Activated CD4-positive, alpha-beta memory T cell treated with anti-CD3 and anti-CD28 coated beads, Interleukin-2, amount 10 ng/mL, durations not matched to agents 7 days and 5 days (primary cell): ENCODE measurements at regions of chr6 and their contacts with region 1.

Region 1: GRCh38 chr6:139364302-139364981 is 10.0 kb downstream of the CITED2 start:
- DNase-seq: no peak
- H3K4me3 Mint-ChIP-seq: no peak overlapping the region
- H3K27ac Mint-ChIP-seq: no peak overlapping the region
- H3K4me1 Mint-ChIP-seq: peaks cover 41% of the 10 kb centered on the region
- H3K27me3 Mint-ChIP-seq: no peaks in the 10 kb centered on the region

Region 2: DNA sequence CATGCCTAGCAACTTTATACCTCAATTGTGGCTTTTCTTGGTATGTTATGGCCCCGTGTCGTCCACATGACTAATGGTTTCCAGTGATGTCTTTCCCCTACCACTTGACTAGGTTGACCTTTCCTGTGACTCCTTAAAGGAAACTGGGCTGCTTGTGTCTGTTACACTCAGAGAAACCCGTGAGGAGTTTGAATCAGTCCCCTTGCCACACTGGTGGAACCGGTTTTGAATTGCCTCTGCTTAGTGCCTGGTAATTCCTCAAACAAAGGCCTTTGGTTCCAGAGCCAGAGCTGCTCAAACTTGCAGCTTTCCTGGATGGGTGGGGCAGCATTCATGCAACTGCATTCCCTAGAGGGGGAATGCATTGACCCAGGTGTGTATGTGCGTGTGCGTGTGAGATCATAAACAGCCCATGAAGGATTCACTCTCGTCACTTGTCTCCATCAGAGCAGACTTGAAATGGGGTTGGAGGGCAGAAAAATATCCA is 546.6 kb before region 1 on chr6:
- CTCF ChIA-PET with region 1: interaction called, 28 read pairs
- POLR2A ChIA-PET with region 1: no interaction called
- DNase-seq: peak; percentile 25
- H3K4me3 Mint-ChIP-seq: no peak overlapping the region
- H3K27ac Mint-ChIP-seq: no peak overlapping the region
- H3K4me1 Mint-ChIP-seq: peaks cover 37% of the 10 kb centered on the region
- H3K27me3 Mint-ChIP-seq: no peaks in the 10 kb centered on the region

Region 3: DNA sequence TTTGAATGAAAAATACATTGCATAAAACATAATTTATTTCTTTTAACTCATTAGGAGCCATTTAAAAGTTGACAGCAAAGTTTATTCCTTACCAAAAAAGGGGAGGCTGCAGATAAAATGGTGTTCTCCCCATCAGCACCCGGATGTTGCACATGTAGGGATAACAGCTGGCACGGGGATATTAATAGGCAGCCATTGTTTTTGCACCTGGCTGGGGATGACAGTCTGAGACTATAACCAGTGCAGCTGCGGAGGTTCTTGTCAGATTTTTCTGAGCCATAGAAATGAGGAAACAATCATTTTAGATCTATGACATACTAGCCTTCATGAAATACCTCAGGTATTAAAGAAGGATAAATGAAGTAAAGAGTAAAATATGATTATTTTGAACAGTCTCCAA is 249.7 kb before region 1 on chr6:
- CTCF ChIA-PET with region 1: interaction called, 10 read pairs
- POLR2A ChIA-PET with region 1: interaction called, 9 read pairs
- DNase-seq: no peak
- H3K4me3 Mint-ChIP-seq: no peak overlapping the region
- H3K27ac Mint-ChIP-seq: no peak overlapping the region
- H3K4me1 Mint-ChIP-seq: peaks cover 50% of the 10 kb centered on the region
- H3K27me3 Mint-ChIP-seq: no peaks in the 10 kb centered on the region

Region 4: DNA sequence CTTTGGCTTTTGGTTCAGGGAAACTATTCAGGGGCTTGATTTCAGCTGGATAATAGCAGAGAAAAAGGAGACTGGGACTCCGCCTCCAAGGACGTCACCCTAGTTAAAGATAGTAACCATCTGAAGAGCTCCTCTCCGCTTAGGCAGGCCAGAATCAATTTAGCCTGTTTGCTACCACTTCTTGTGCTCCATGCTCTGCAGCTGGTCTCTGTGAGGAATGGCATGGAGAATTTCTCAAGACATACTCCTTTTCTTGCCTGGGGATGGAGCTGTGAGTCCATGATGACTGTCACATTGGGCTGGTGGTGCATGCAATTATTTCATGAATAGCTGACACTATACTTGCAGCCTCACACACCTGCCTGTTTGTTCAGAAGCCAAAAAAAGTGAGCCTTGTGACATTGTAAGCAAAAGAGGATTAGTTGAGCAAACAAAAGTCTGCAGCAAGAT is 134.0 kb before region 1 on chr6:
- CTCF ChIA-PET with region 1: interaction called, 14 read pairs
- POLR2A ChIA-PET with region 1: interaction called, 4 read pairs
- DNase-seq: no peak
- H3K4me3 Mint-ChIP-seq: no peak overlapping the region
- H3K27ac Mint-ChIP-seq: no peak overlapping the region
- H3K4me1 Mint-ChIP-seq: no peaks in the 10 kb centered on the region
- H3K27me3 Mint-ChIP-seq: no peaks in the 10 kb centered on the region

Region 5: GRCh38 chr6:139349464-139350020 is 14.9 kb before region 1 on chr6:
- CTCF ChIA-PET with region 1: no interaction called
- POLR2A ChIA-PET with region 1: no interaction called
- DNase-seq: no peak
- H3K4me3 Mint-ChIP-seq: no peak overlapping the region
- H3K27ac Mint-ChIP-seq: no peak overlapping the region
- H3K4me1 Mint-ChIP-seq: no peaks in the 10 kb centered on the region
- H3K27me3 Mint-ChIP-seq: no peaks in the 10 kb centered on the region